Left colon (tissue), 2 donors: ENCODE measurements at regions of chr6 and their contacts with region 1.

Region 1: GRCh38 chr6:6912817-6913744 is 194.7 kb upstream of the RREB1 start:
- DNase-seq: no peak
- ATAC-seq: no peak

Region 2: GRCh38 chr6:6505111-6505510 is 408.0 kb before region 1 on chr6:
- intact Hi-C with region 1: no loop called
- DNase-seq: no peak
- ATAC-seq: no peak

Region 3: GRCh38 chr6:6712258-6712999 is 200.7 kb before region 1 on chr6:
- intact Hi-C with region 1: loop called in 1 of 2 experiments (anchors 5 kb)
- DNase-seq: peak; percentile 61 to 65
- ATAC-seq: peak; percentile 91